CD4-positive, alpha-beta memory T cell (primary cell): ENCODE measurements at regions of chr18 and their contacts with region 1.

Region 1: GRCh38 chr18:63979409-63979920 is 9.6 kb downstream of the SERPINB8 start:
- DNase-seq: peak; percentile 38 to 49 (median 41)
- H3K4me3 ChIP-seq: no peak overlapping the region
- H3K4me3 Mint-ChIP-seq: peak overlapping the region in 3 of 8 donors; percentile 9 to 69 (median 15)
- H3K27ac ChIP-seq: no peak overlapping the region
- H3K27ac Mint-ChIP-seq: peak overlapping the region in 3 of 7 donors; percentile 50 to 71 (median 70)
- H3K4me1 ChIP-seq: peaks cover 5% of the 10 kb centered on the region
- H3K4me1 Mint-ChIP-seq: peaks cover 13 to 23% (median 15%) of the 10 kb centered on the region in 4 donors
- H3K27me3 ChIP-seq: no peaks in the 10 kb centered on the region
- H3K27me3 Mint-ChIP-seq: no peaks in the 10 kb centered on the region

Region 2: GRCh38 chr18:63890950-63891304 is 88.5 kb before region 1 on chr18:
- CTCF ChIA-PET with region 1: no interaction called
- POLR2A ChIA-PET with region 1: no interaction called
- intact Hi-C with region 1: loop called (anchors 1 kb)
- DNase-seq: no peak
- H3K4me3 ChIP-seq: no peak overlapping the region
- H3K4me3 Mint-ChIP-seq: no peak overlapping the region
- H3K27ac ChIP-seq: no peak overlapping the region
- H3K27ac Mint-ChIP-seq: no peak overlapping the region
- H3K4me1 ChIP-seq: no peaks in the 10 kb centered on the region
- H3K4me1 Mint-ChIP-seq: no peaks in the 10 kb centered on the region
- H3K27me3 ChIP-seq: no peaks in the 10 kb centered on the region
- H3K27me3 Mint-ChIP-seq: peaks cover 6 to 17% of the 10 kb centered on the region in 2 donors

Region 3: DNA sequence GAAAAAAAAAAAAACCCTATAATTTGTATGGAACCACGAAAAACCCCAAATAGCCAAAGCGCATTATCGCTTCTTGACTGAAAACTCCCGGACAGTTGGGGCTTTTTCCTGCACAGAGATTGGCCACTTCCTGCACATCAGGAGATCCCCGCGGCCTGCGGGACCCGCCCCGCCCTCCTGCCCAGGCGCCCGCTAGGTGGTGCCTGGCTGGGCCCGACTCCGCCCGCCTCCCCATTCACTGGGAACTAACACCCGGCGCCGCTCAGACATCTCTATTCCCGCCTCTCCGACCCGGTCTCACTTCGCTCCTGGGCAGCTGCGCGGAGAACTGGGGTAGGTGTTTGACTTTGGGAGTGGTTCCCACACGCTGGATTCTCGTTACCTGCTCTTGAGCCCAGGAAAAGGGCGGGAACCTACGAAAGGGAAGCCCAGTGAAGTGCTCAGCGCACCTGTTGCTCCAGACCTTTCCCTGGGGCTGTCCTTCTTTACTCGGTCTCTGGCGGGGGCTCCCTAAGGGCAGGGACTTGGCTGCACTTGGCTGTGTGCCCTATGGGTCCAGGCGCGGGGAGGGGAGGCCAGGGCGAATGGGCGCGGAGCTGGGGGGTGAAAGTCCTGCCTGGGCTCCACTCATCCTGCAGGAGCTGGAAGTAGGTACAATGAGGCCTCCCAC is 30.3 kb before region 1 on chr18 and contains the start of gene HMSD:
- CTCF ChIA-PET with region 1: interaction called, 5 read pairs
- POLR2A ChIA-PET with region 1: no interaction called
- intact Hi-C with region 1: loop called (anchors 1 kb)
- DNase-seq: peak; percentile 34 to 61 (median 46)
- H3K4me3 ChIP-seq: peak within 1 kb of the TSS; percentile 29 to 42
- H3K4me3 Mint-ChIP-seq: peak within 1 kb of the TSS; percentile 73 to 89 (median 78)
- H3K27ac ChIP-seq: no peak within 1 kb of the TSS
- H3K27ac Mint-ChIP-seq: peak within 1 kb of the TSS in 2 of 7 donors; percentile 60 to 61
- H3K4me1 ChIP-seq: peaks cover 13% of the 10 kb centered on the region
- H3K4me1 Mint-ChIP-seq: peaks cover 8 to 27% (median 20%) of the 10 kb centered on the region in 4 donors
- H3K27me3 ChIP-seq: no peaks in the 10 kb centered on the region
- H3K27me3 Mint-ChIP-seq: peaks cover 4 to 13% of the 10 kb centered on the region in 2 donors
- total RNA-seq, gene HMSD: 1.8 to 2.2 TPM

Region 4: GRCh38 chr18:63963615-63964256 is 15.7 kb before region 1 on chr18:
- CTCF ChIA-PET with region 1: interaction called, 118 read pairs
- POLR2A ChIA-PET with region 1: interaction called, 3 read pairs
- intact Hi-C with region 1: loop called (anchors 1 kb)
- DNase-seq: peak; percentile 57 to 71 (median 61)
- H3K4me3 ChIP-seq: no peak overlapping the region
- H3K4me3 Mint-ChIP-seq: no peak overlapping the region
- H3K27ac ChIP-seq: no peak overlapping the region
- H3K27ac Mint-ChIP-seq: peak overlapping the region in 2 of 7 donors; percentile 2 to 25
- H3K4me1 ChIP-seq: no peaks in the 10 kb centered on the region
- H3K4me1 Mint-ChIP-seq: peaks cover 0 to 2% (median 0%) of the 10 kb centered on the region in 4 donors
- H3K27me3 ChIP-seq: no peaks in the 10 kb centered on the region
- H3K27me3 Mint-ChIP-seq: peaks cover 0 to 6% of the 10 kb centered on the region in 2 donors

Region 5: GRCh38 chr18:63994783-63995399 is 15.4 kb after region 1 on chr18:
- CTCF ChIA-PET with region 1: interaction called, 20 read pairs
- POLR2A ChIA-PET with region 1: no interaction called
- intact Hi-C with region 1: no loop called
- DNase-seq: peak in 4 of 5 donors; percentile 20 to 36 (median 28)
- H3K4me3 ChIP-seq: no peak overlapping the region
- H3K4me3 Mint-ChIP-seq: no peak overlapping the region
- H3K27ac ChIP-seq: no peak overlapping the region
- H3K27ac Mint-ChIP-seq: no peak overlapping the region
- H3K4me1 ChIP-seq: no peaks in the 10 kb centered on the region
- H3K4me1 Mint-ChIP-seq: peaks cover 0 to 9% (median 8%) of the 10 kb centered on the region in 4 donors
- H3K27me3 ChIP-seq: no peaks in the 10 kb centered on the region
- H3K27me3 Mint-ChIP-seq: peaks cover 1 to 2% of the 10 kb centered on the region in 2 donors